ENCODE measurements at regions of chr2 and their contacts with region 1.

Region 1: GRCh38 chr2:142165790-142166189 is 35.0 kb upstream of the LRP1B start:
- DNase-seq: no peak
- ATAC-seq: peak in 1 of 2 donors; percentile 67

Region 2: GRCh38 chr2:142065700-142066099 is 100.1 kb before region 1 on chr2:
- intact Hi-C with region 1: no loop called
- DNase-seq: no peak
- ATAC-seq: no peak

Region 3: GRCh38 chr2:142585785-142586184 is 420.0 kb after region 1 on chr2:
- intact Hi-C with region 1: loop called in 1 of 2 experiments (anchors 10 kb)
- DNase-seq: no peak
- ATAC-seq: no peak

Region 4: GRCh38 chr2:142603759-142604158 is 438.0 kb after region 1 on chr2:
- intact Hi-C with region 1: loop called in 1 of 2 experiments (anchors 5 kb)
- DNase-seq: no peak
- ATAC-seq: no peak